Motor neuron (in vitro differentiated cells): ENCODE measurements at regions of chr1 and their contacts with region 1.

Region 1: GRCh38 chr1:46197964-46198811 is at the start of gene POMGNT1:
- ATAC-seq: peak; percentile 79 to 90 (median 80)
- H3K4me3 ChIP-seq: peak within 1 kb of the TSS; percentile 41 to 69 (median 58)
- H3K27ac ChIP-seq: peak within 1 kb of the TSS; percentile 19 to 68
- H3K4me1 ChIP-seq: peaks cover 7 to 14% of the 10 kb centered on the region in 2 donors
- total RNA-seq, gene POMGNT1: 40.9 to 80.1 (median 59.1) TPM

Region 2: DNA sequence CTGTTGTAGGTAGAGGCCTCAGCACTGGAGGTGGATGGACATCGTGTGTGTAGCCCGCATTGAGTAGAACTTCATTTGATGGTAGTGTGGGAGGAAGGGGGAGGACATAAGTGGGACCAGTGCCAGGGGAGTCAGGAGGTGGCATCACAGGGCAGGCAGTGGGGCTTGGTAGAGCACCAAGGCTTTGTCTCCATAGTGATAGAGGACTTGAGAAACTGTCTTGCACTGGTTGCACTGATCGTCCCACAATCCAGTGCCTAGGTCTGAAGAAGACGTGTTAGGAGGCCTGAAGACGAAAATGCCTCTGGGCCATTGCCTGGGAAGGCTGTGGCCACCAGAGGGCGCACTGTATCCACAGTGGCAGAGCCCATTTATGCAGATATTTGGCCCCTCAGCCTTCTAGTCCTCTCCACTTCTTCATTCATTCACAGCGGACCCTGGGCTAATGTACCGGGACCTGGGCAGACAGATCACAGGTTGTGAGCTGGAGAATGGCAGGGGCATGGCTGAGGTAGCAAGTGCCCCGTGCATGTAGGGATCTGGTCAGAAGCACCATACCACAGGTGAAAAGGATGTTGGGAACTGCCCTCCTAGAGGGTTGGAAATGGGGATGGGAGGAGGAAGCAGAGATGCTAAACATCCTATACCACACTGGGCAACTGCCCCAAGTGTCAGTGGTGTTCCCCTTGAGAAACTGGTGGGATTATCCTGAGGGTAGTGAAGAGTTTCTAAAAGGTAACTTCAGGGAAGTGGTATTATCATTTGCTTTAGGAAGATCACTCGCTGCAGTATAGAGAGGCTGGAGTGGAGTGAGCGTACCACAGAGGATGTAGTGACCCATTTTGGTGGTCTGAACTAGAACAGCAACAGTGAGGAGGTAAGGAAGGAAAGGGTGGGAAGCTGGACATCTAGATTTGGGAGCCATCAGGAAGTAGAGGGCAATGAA is 161.0 kb before region 1 on chr1:
- in situ Hi-C with region 1: loop called in 4 of 9 experiments (anchors 25 kb)
- ATAC-seq: peak; percentile 53 to 80 (median 75)
- H3K4me3 ChIP-seq: no peak overlapping the region
- H3K27ac ChIP-seq: no peak overlapping the region
- H3K4me1 ChIP-seq: peaks cover 0 to 5% of the 10 kb centered on the region in 2 donors

Region 3: DNA sequence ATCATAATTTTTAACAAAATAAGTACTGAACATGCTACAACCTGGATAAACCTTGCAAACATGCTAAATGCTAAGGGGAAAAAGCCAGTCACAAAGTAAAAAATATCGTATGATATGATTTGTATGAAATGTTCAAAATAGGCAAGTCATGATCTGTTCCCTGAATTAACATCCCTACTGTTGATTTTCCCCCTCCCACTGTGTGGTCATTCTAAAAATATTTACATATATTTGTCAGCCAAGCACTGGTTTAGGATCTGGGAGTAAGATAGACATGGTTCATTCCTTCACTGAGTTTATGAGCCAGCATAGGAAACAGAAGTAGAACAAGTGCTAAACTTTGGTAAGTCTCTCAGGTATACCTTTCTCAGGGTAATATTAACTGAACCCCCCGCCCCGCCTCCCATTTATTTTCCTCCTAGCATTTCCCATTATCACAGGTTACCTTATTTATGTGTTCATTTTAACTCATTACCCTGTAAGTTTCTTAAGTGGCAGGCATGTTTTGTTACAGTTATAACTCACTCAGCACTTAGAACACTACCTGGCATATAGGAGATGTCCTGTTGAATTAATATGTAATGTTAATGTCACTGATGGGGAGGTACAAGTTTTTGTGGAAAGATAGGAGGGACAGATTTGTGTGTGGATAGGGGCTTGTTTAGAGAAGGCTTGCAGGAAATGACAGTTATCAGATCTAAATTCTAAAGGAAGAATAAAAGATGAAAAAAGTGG is 117.6 kb after region 1 on chr1:
- in situ Hi-C with region 1: no loop called
- ATAC-seq: peak in 3 of 8 experiments; percentile 71 to 95 (median 93)
- H3K4me3 ChIP-seq: no peak overlapping the region
- H3K27ac ChIP-seq: no peak overlapping the region
- H3K4me1 ChIP-seq: peaks cover 3 to 8% of the 10 kb centered on the region in 2 donors